ENCODE measurements at regions of chr2 and their contacts with region 1.

Region 1: DNA sequence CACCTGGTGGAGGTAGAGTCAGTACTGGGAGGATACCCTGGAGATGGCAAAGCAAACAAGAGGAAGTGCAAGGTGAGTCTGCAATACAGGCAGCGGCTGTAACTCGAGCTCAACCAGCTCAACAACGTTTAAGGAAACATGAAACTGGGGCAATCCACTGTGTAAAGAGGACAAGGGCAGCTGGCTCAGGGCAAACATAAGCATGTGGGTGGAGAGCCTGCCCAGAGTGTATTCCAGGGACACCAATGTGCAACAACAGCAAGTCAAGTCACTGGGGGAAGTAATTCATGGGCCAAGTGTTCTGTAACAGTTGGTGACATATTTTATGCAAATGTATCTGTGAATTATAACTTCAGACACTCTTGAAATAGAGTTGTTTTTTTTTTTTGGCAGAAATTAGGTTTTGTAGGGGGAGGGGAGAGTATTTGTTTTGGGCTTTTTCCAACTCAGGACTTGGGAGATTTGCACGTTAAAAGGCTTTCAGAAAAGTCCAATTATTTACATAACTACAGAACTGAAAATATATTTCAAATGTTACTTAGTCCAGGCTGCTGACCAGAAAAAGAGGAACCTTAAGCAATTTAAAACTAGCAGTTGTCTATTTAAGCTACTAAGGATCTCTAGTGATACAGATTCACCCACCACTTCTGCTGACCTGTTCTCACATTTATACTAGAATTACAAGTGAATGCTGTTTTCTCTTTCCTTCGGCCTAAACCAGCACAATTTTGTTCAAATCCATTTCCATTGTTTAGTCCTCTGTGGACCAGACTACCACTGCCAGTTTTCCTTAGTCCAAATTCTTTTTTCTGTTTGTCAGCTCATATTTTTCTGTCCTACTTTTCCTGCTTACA is 18.6 kb downstream of the NRXN1 start:
- DNase-seq: peak; percentile 59 to 67
- H3K4me3 ChIP-seq: no peak overlapping the region
- H3K27ac ChIP-seq: peak overlapping the region in 1 of 2 donors; percentile 52
- H3K4me1 ChIP-seq: no peaks in the 10 kb centered on the region
- H3K27me3 ChIP-seq: no peaks in the 10 kb centered on the region
- CTCF ChIP-seq: no peak
- POLR2A ChIP-seq: no peak

Region 2: GRCh38 chr2:51579412-51579811 is 566.1 kb after region 1 on chr2:
- intact Hi-C with region 1: loop called (anchors 5 kb)
- DNase-seq: no peak
- H3K4me3 ChIP-seq: no peak overlapping the region
- H3K27ac ChIP-seq: no peak overlapping the region
- H3K4me1 ChIP-seq: no peaks in the 10 kb centered on the region
- H3K27me3 ChIP-seq: no peaks in the 10 kb centered on the region
- CTCF ChIP-seq: no peak
- POLR2A ChIP-seq: no peak

Region 3: GRCh38 chr2:52934354-52934898 is 1921.1 kb after region 1 on chr2:
- intact Hi-C with region 1: no loop called
- DNase-seq: peak in 1 of 2 donors; percentile 49
- H3K4me3 ChIP-seq: no peak overlapping the region
- H3K27ac ChIP-seq: peak overlapping the region; percentile 41 to 44
- H3K4me1 ChIP-seq: no peaks in the 10 kb centered on the region
- H3K27me3 ChIP-seq: no peaks in the 10 kb centered on the region
- CTCF ChIP-seq: no peak
- POLR2A ChIP-seq: no peak